Right lobe of liver (tissue), 6 donors: ENCODE measurements at regions of chr3 and their contacts with region 1.

Region 1: GRCh38 chr3:37855363-37855970 is 6.2 kb upstream of the CTDSPL start:
- DNase-seq: peak; percentile 84 to 86 (median 85)
- ATAC-seq: peak; percentile 68 to 73 (median 70)
- H3K4me3 ChIP-seq: no peak overlapping the region
- H3K27ac ChIP-seq: no peak overlapping the region
- H3K4me1 ChIP-seq: peaks cover 0 to 18% (median 8%) of the 10 kb centered on the region in 4 donors
- H3K27me3 ChIP-seq: no peaks in the 10 kb centered on the region
- CTCF ChIP-seq: peak; percentile 91 to 96 (median 92)
- POLR2A ChIP-seq: no peak

Region 2: GRCh38 chr3:37580237-37580636 is 275.2 kb before region 1 on chr3:
- intact Hi-C with region 1: no loop called
- DNase-seq: no peak
- ATAC-seq: peak in 3 of 4 donors; percentile 46 to 73 (median 53)
- H3K4me3 ChIP-seq: no peak overlapping the region
- H3K27ac ChIP-seq: no peak overlapping the region
- H3K4me1 ChIP-seq: no peaks in the 10 kb centered on the region
- H3K27me3 ChIP-seq: no peaks in the 10 kb centered on the region
- CTCF ChIP-seq: no peak
- POLR2A ChIP-seq: no peak

Region 3: DNA sequence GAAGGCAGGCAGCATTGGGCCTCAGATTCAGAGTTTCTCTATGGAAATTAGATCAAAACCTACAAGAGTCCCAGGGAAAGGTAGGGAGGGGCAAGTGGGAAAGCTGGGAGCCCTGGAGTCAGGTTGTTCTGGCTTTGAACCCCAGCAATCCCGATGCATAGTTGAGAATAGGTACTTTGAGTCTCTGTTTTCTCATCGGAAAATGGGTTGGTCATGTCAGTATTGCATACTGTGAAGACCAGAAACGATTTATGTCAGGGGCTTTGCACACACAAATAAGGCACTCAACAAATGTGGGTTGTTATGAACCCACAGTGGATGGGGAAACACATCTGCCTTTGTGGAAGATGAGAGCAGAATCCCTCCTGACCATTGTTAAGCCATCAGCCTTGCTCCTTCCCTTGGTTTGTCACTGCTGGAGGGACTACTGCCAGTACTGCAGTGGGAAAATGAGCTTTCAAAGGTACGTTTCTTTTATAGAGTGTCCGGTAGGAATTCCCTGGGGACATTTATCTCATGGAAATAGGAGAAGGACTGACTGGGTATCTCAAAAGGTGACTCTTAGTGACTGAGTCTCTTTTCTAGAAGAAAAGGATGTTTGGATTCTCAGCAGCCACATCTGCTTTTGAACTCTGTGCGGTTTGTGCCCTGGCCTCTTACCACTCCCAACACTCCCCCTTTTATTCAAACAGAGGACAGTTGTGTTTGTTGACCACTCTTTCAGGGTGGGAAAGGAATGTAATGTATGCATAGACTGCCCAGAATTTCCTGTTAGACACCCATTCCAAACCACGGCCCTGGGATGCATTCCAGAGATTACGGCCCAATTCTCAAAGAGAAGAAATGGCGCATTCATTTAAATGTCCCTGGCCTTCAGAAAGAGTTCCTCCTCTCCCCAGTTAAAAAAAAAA is 80.5 kb after region 1 on chr3:
- intact Hi-C with region 1: no loop called
- DNase-seq: no peak
- ATAC-seq: peak in 2 of 4 donors; percentile 7 to 19
- H3K4me3 ChIP-seq: no peak overlapping the region
- H3K27ac ChIP-seq: peak overlapping the region; percentile 32 to 35 (median 34)
- H3K4me1 ChIP-seq: peaks cover 3 to 39% (median 18%) of the 10 kb centered on the region in 4 donors
- H3K27me3 ChIP-seq: no peaks in the 10 kb centered on the region
- CTCF ChIP-seq: no peak
- POLR2A ChIP-seq: no peak

Region 4: DNA sequence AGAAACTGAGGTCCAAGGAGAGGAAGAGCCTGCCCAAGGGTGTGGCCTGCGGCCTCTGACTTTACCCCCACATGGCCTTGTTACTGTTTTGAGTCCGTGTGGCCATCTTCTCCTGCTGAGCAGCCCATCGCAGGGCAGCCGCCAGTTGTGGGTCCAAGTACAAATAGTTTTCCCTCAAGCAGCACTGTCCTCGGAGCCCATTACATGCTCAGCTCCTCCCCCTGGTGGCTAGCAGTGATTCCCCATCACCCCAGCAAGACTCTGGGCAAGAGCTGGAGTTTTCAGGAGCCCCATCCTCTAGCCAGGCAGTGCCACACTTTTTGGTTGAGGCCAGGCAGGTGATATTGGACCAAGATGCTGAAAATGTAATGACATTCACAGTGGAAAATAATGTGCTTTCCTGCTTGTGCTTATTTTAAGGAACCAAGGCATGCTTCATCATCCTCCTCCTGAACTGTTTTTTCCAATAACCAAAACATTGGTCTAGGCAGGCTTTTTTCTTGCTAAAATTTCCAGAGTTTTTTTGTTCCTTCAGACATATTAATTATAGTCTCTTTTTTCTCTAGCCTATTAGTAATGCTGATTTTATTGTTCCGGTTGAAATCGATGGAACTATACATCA is 111.9 kb after region 1 on chr3:
- intact Hi-C with region 1: loop called (anchors 5 kb)
- DNase-seq: peak; percentile 68 to 77 (median 72)
- ATAC-seq: peak; percentile 51 to 66 (median 57)
- H3K4me3 ChIP-seq: no peak overlapping the region
- H3K27ac ChIP-seq: no peak overlapping the region
- H3K4me1 ChIP-seq: peaks cover 0 to 40% (median 21%) of the 10 kb centered on the region in 4 donors
- H3K27me3 ChIP-seq: no peaks in the 10 kb centered on the region
- CTCF ChIP-seq: peak; percentile 79 to 87 (median 84)
- POLR2A ChIP-seq: no peak

Region 5: DNA sequence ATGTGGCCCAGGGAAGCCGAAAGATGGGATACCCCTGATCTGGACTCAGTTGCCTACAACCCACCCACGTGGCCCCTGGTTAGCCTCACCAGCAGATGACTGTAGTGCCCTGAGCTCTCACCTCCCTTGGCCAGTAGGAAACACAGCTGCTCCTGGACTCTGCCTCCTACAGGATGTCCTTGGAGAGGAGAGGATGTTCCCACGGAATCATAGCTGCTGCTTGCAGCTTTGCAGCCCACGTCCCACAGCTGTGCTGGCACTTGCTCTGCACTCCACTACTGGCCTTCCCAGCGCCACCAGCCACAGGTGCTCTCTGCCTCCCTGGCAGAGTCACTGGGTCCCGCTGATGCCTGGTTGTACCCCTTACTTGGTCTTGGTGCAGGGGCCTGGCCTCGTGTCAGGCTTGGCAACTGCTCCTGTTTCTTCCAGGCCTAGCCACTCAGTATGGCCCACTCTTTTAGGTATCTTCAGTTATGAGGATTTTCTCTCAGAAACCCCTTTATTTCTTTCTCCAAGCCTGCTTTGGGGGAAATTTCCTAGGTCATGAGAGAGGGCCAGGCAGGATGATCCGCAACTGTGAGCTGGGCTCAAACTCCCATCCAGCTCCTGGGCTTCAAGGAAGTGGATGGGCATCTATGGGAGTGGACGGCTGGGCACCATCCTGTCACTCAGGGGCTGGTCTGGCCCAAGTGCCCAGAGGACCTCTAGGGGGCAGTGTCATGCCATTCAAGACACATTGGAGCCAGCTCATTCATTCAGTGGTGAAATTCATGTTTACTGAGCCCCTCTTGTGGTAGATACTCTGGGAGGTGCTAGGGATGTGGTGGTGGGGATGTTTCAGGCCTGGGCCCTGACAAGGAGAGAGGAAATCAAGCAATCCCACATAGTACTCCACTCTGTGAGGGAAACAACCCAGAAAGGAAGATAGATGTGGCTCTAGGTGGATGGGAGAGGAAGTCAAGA is 118.9 kb after region 1 on chr3:
- intact Hi-C with region 1: loop called (anchors 5 kb)
- DNase-seq: peak; percentile 67 to 69 (median 67)
- ATAC-seq: peak; percentile 86 to 93 (median 86)
- H3K4me3 ChIP-seq: no peak overlapping the region
- H3K27ac ChIP-seq: no peak overlapping the region
- H3K4me1 ChIP-seq: no peaks in the 10 kb centered on the region
- H3K27me3 ChIP-seq: no peaks in the 10 kb centered on the region
- CTCF ChIP-seq: peak; percentile 68 to 84 (median 78)
- POLR2A ChIP-seq: no peak